ENCODE measurements at regions of chr9 and their contacts with region 1.

Region 1: GRCh38 chr9:22446950-22447617 is 460 bp downstream of the DMRTA1 start:
- DNase-seq: peak; percentile 65 to 78
- ATAC-seq: peak; percentile 87
- H3K4me3 ChIP-seq: peak overlapping the region; percentile 51 to 73
- H3K27ac ChIP-seq: peak overlapping the region in 1 of 2 donors; percentile 74
- H3K4me1 ChIP-seq: peaks cover 0 to 4% of the 10 kb centered on the region in 2 donors
- H3K27me3 ChIP-seq: no peaks in the 10 kb centered on the region

Region 2: DNA sequence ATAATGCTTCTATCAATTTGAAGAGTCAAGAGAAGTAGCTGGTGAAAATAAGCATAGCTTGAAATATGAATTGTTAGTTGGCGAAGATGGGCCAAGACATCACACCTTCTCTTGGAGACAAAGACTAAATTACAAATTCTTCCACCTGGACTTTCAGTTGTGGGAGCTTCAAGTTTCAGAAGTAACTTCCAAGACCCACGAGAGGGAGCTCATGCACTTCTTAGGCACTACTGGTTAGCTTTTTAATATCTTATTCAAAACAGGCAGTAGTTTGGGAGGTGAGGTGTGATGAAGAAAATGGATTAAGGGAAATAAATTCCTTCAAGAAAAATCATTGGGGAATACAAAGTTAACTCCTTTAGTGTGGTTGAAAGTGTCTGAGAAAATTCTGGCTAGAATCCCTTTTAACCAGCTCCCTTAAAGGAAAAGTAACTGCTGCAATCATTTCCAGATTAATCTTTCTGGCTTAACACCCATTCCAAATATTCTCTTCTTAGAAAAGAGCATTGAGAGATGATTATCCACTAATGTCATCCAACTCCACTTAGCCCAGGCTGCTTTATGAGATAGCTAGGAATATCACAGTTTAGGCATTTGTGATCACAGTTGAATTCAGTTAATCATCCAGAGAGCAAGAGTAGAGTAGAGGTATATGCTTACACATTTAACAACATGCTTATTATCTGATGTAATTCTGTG is 139.9 kb before region 1 on chr9:
- intact Hi-C with region 1: loop called (anchors 2 to 5 kb)
- DNase-seq: no peak
- ATAC-seq: peak; percentile 66
- H3K4me3 ChIP-seq: no peak overlapping the region
- H3K27ac ChIP-seq: no peak overlapping the region
- H3K4me1 ChIP-seq: no peaks in the 10 kb centered on the region
- H3K27me3 ChIP-seq: no peaks in the 10 kb centered on the region

Region 3: DNA sequence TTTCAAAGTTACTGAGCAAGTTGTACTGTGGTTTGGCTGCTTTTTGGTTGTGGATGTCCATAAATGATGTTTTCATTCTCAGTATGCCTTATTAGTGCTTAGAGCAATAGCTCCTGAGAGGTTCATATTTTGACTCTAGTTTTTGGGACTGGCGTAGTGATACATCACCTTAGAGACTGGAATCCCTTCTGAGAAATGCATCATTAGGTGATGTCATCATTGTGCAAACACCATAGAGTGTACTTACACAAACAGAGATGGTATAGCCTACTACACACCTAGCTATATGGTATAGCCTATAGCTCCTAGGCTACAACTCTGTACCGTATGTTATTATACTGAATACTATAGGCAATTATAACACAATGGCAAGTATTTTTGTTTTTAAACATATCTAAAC is 92.8 kb after region 1 on chr9:
- intact Hi-C with region 1: no loop called
- DNase-seq: no peak
- ATAC-seq: no peak
- H3K4me3 ChIP-seq: no peak overlapping the region
- H3K27ac ChIP-seq: no peak overlapping the region
- H3K4me1 ChIP-seq: no peaks in the 10 kb centered on the region
- H3K27me3 ChIP-seq: no peaks in the 10 kb centered on the region

Measured in aorta (tissue), 5 donors.